H1 (cell line): ENCODE measurements at regions of chr13 and their contacts with region 1.

Region 1: GRCh38 chr13:51895906-51896888 is 34.4 kb downstream of the CCDC70 start:
- DNase-seq: peak; percentile 51 to 69
- H3K4me3 ChIP-seq: no peak overlapping the region
- H3K27ac ChIP-seq: no peak overlapping the region
- H3K4me1 ChIP-seq: 0 out of 7 replicates have a peak, but pooled peaks cover 0 to 4% (median 0%) of the 10 kb centered on the region in 4 experiments
- H3K27me3 ChIP-seq: no peaks in the 10 kb centered on the region
- CTCF ChIP-seq: peak; percentile 86 to 93 (median 88)
- EP300 ChIP-seq: no peak
- POLR2A ChIP-seq: no peak
- RAD21 ChIP-seq: peak; percentile 88 to 92

Region 2: DNA sequence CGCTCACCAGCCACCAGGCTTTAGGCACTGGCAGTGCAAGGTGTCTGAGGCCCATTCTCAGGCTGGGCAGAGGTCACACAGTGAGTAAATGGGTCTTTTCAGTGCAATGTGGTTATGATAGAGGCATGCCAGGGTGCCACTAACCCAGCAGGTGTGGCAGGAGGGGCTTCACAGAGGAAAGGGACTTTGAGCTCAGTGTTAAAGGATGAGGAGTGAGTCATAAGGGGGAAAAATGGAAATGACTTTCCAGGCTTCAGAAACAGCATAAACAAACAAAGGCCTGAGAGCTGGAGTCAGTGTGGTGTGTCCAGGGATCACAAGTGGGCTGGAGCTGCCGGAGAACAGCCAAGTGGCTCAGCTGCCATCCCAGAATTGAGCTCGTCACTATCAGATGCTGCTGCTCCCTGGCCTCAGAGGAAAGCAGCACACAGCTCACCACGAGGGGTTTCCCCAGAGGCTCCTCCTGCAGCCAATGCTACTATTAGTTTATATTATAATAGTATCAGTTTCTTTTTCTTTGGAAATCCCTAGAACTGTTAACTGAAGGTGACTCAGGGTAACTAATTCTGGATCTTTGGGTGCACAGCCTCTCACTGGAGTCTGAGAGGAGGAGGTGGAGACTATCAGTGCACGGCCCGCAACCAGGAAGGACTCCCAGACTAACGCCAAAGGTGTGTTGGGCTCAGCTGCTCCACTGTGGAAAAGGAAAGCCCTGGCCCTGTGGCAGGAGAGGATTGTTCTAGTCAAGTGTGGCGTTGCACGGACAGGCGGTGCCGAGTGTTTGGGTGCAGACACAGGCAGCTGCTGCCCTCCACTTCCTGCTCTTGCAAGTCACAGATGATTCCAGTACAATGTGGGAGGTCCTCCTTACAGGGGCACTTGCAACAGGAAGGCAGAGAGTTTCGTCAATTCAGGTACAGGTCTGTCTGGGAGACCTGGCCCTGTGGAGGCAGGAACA is 131.7 kb before region 1 on chr13:
- CTCF ChIA-PET with region 1: no interaction called
- POLR2A ChIA-PET with region 1: no interaction called
- DNase-seq: no peak
- H3K4me3 ChIP-seq: no peak overlapping the region
- H3K27ac ChIP-seq: no peak overlapping the region
- H3K4me1 ChIP-seq: peaks cover 7 to 10% (median 9%) of the 10 kb centered on the region in 4 experiments
- H3K27me3 ChIP-seq: no peaks in the 10 kb centered on the region
- CTCF ChIP-seq: no peak
- EP300 ChIP-seq: no peak
- POLR2A ChIP-seq: no peak
- RAD21 ChIP-seq: no peak

Region 3: DNA sequence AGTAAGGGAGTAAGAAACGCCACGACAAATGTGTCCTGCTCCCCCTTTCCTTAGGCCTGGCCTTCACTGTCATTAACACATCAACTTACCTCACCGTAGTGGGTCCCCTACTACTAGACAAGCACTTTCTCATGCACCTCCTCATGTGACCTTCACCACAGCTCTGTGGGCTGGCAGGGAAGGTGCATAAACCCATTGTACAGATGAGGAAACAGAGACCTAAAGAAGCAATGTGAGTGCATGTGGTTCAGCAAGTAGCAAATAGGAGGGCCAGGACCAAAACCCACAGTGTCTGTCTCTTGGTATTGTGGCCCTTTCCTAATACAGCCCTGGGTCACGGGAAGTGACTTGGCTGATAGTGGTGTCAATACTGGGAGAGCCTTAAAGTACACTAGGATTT is 29.1 kb before region 1 on chr13:
- CTCF ChIA-PET with region 1: interaction called, 11 read pairs
- POLR2A ChIA-PET with region 1: no interaction called
- DNase-seq: no peak
- H3K4me3 ChIP-seq: no peak overlapping the region
- H3K27ac ChIP-seq: no peak overlapping the region
- H3K4me1 ChIP-seq: no peaks in the 10 kb centered on the region
- H3K27me3 ChIP-seq: peaks cover 0 to 2% (median 0%) of the 10 kb centered on the region in 4 experiments; a peak in 1 of 7 replicates
- CTCF ChIP-seq: no peak
- EP300 ChIP-seq: no peak
- POLR2A ChIP-seq: no peak
- RAD21 ChIP-seq: no peak

Region 4: DNA sequence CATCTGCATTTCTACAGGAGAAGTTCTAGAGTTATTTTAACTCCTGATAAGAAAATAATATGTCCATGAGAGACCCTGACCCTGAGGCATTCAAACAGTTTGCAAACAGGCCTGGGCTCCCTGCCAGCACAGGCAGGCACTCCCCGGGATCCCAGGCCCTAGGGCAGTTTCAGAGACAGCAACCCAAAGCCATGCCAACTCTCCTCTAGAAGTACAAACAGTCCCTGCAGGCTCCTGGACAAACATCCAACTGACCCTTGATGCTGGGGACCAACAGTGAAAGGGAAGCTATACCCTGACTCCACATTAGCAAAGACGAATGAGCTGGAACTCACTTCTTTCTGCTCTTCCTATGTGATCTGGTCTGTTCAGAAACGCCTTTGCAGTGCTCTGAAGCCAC is 10.4 kb after region 1 on chr13:
- CTCF ChIA-PET with region 1: interaction called, 71 read pairs
- POLR2A ChIA-PET with region 1: interaction called, 3 read pairs
- DNase-seq: no peak
- H3K4me3 ChIP-seq: no peak overlapping the region
- H3K27ac ChIP-seq: no peak overlapping the region
- H3K4me1 ChIP-seq: peaks cover 0 to 5% (median under 1%) of the 10 kb centered on the region in 4 experiments; a peak in 2 of 7 replicates
- H3K27me3 ChIP-seq: no peaks in the 10 kb centered on the region
- CTCF ChIP-seq: no peak
- EP300 ChIP-seq: no peak
- POLR2A ChIP-seq: no peak
- RAD21 ChIP-seq: no peak

Region 5: GRCh38 chr13:51923983-51924539 is 27.9 kb after region 1 on chr13:
- CTCF ChIA-PET with region 1: interaction called, 59 read pairs
- POLR2A ChIA-PET with region 1: no interaction called
- DNase-seq: no peak
- H3K4me3 ChIP-seq: no peak overlapping the region
- H3K27ac ChIP-seq: no peak overlapping the region
- H3K4me1 ChIP-seq: no peaks in the 10 kb centered on the region
- H3K27me3 ChIP-seq: no peaks in the 10 kb centered on the region
- CTCF ChIP-seq: peak; percentile 47 to 57 (median 51)
- EP300 ChIP-seq: no peak
- POLR2A ChIP-seq: no peak
- RAD21 ChIP-seq: peak; percentile 37 to 46